ENCODE measurements at regions of chr10 and their contacts with region 1.

Region 1: GRCh38 chr10:86312701-86313516 is 53.7 kb downstream of the GRID1 start:
- DNase-seq: no peak
- H3K4me3 ChIP-seq: no peak overlapping the region
- H3K27ac ChIP-seq: no peak overlapping the region
- H3K4me1 ChIP-seq: peaks cover 0 to 6% (median 2%) of the 10 kb centered on the region in 4 experiments; a peak in 3 of 7 replicates
- H3K27me3 ChIP-seq: 0 out of 7 replicates have a peak, but pooled peaks cover 0 to 2% (median 0%) of the 10 kb centered on the region in 4 experiments
- CTCF ChIP-seq: no peak
- EP300 ChIP-seq: no peak
- POLR2A ChIP-seq: no peak
- RAD21 ChIP-seq: no peak

Region 2: GRCh38 chr10:86291616-86292340 is 21.1 kb before region 1 on chr10:
- CTCF ChIA-PET with region 1: interaction called, 15 read pairs
- POLR2A ChIA-PET with region 1: no interaction called
- DNase-seq: peak in 1 of 2 experiments; percentile 68
- H3K4me3 ChIP-seq: no peak overlapping the region
- H3K27ac ChIP-seq: no peak overlapping the region
- H3K4me1 ChIP-seq: peaks cover 0 to 19% (median 15%) of the 10 kb centered on the region in 4 experiments; a peak in 6 of 7 replicates
- H3K27me3 ChIP-seq: peaks cover 0 to 4% (median 2%) of the 10 kb centered on the region in 4 experiments; a peak in 3 of 7 replicates
- CTCF ChIP-seq: peak; percentile 38 to 58 (median 45); a peak in 3 of 4 replicates
- EP300 ChIP-seq: no peak
- POLR2A ChIP-seq: no peak
- RAD21 ChIP-seq: peak; percentile 27 to 50

Measured in H1 (cell line).